ENCODE measurements at regions of chr22 and their contacts with region 1.

Region 1: DNA sequence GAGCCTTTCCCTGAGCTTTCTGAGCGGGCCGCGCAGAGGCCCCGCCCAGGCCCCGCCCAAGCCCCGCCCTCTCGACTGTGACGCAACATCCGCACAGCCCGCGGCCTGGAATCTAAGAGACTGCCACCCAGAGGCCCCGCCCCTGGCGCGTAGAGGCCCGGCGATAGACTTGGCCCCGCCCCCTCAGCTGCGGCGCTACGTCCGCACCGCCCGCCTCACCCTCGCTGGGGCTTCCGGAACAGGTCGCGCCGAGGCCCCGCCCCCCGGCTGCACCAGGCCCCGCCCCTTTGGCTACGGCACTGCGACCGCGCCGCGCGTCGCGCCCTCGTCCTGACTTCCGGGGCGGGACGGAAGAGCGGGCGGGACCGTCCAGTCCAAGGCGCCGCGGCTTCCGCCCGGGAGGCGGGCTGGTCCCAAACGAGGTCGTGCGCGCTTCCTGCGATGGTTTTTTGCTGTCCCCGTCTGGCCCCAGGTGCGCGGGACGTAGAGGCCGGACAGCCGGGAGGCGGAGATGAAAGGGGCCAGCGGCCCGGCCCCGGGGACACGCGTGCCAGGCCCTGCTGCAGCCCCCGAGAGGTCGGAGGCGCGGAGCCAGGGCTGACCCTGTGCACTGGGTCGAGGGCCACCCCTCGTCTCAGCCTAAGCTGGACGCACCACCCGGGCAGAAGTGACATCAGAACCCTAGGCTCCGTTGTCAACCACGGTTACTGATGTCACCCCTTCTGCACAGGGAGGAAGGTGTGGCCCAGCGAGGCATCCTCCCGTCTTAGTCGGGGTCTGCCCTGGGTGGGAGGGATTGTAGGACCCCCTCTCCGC is 59.0 kb upstream of the WNT7B start:
- DNase-seq: peak; percentile 99
- ATAC-seq: peak; percentile 94
- H3K4me3 Mint-ChIP-seq: peak overlapping the region; percentile 88
- H3K27ac Mint-ChIP-seq: peak overlapping the region; percentile 92
- H3K4me1 Mint-ChIP-seq: peaks cover 18% of the 10 kb centered on the region
- H3K27me3 Mint-ChIP-seq: no peaks in the 10 kb centered on the region
- CTCF ChIP-seq: no peak

Region 2: GRCh38 chr22:46006379-46007002 is 29.5 kb before region 1 on chr22:
- CTCF ChIA-PET with region 1: interaction called, 19 read pairs
- POLR2A ChIA-PET with region 1: interaction called, 5 read pairs
- intact Hi-C with region 1: no loop called
- DNase-seq: peak; percentile 85
- ATAC-seq: peak; percentile 84
- H3K4me3 Mint-ChIP-seq: no peak overlapping the region
- H3K27ac Mint-ChIP-seq: no peak overlapping the region
- H3K4me1 Mint-ChIP-seq: peaks cover 12% of the 10 kb centered on the region
- H3K27me3 Mint-ChIP-seq: no peaks in the 10 kb centered on the region
- CTCF ChIP-seq: peak; percentile 80

Region 3: DNA sequence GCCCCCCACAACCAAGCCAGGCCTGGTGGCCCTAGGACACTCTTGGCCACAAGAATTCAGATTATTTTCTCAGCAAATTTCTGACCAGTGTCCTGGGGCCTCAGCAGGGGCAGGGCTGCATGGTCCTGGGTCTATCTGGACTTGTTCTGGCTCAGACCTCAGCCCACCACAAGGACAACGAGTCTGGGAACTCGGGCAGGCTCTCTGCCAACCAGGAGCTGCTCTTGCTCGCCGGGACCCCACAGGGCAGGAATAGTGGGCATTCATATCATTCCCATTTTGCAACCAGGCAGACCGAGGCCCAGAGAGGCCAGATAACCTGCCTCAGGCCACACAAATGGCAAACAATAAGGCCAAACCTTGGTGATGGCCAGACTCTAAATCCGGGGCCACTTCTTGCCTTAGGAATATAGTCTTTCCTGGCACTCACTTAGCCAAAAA is 16.4 kb after region 1 on chr22:
- CTCF ChIA-PET with region 1: no interaction called
- POLR2A ChIA-PET with region 1: interaction called, 51 read pairs
- intact Hi-C with region 1: loop called (anchors 1 kb)
- DNase-seq: no peak
- ATAC-seq: no peak
- H3K4me3 Mint-ChIP-seq: peak overlapping the region; percentile 91
- H3K27ac Mint-ChIP-seq: peak overlapping the region; percentile 96
- H3K4me1 Mint-ChIP-seq: peaks cover 56% of the 10 kb centered on the region
- H3K27me3 Mint-ChIP-seq: no peaks in the 10 kb centered on the region
- CTCF ChIP-seq: no peak

Region 4: DNA sequence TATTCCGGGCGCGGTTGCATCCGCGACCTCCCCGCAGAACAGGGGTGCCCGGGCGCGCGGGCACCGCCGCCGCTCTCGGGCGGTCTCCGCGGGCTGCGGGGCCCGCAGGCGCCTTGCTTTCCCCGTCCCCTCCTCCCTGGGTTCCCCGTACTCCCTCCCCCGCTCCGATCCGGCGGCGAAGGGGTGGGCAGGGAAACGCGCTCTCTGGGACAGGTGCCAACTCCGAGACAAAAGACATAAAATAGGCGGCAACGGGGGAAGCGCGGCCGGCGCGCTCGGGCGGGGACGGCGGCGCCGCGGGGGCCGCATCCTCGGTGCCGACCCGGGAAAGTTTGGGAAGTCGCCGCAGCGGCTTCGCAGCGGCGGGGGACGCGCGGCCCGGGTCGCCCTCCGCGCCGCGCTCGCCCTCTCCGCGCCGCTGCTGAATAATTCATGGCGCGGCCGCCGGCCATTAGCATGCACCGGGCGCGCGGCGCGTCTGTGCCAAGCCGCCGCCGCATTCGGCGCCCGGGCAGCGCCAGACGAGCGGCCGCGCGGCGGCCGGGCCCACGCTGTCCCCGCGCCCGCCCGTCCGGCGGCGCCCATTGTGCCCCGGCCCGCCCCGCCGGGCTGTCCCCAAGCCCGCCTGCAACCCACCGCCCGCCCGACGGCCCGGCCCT is 35.6 kb after region 1 on chr22:
- CTCF ChIA-PET with region 1: interaction called, 5 read pairs
- POLR2A ChIA-PET with region 1: interaction called, 58 read pairs
- intact Hi-C with region 1: loop called (anchors 1 kb)
- DNase-seq: peak; percentile 61
- ATAC-seq: peak; percentile 22
- H3K4me3 Mint-ChIP-seq: peak overlapping the region; percentile 87
- H3K27ac Mint-ChIP-seq: peak overlapping the region; percentile 84
- H3K4me1 Mint-ChIP-seq: peaks cover 27% of the 10 kb centered on the region
- H3K27me3 Mint-ChIP-seq: no peaks in the 10 kb centered on the region
- CTCF ChIP-seq: no peak

Region 5: DNA sequence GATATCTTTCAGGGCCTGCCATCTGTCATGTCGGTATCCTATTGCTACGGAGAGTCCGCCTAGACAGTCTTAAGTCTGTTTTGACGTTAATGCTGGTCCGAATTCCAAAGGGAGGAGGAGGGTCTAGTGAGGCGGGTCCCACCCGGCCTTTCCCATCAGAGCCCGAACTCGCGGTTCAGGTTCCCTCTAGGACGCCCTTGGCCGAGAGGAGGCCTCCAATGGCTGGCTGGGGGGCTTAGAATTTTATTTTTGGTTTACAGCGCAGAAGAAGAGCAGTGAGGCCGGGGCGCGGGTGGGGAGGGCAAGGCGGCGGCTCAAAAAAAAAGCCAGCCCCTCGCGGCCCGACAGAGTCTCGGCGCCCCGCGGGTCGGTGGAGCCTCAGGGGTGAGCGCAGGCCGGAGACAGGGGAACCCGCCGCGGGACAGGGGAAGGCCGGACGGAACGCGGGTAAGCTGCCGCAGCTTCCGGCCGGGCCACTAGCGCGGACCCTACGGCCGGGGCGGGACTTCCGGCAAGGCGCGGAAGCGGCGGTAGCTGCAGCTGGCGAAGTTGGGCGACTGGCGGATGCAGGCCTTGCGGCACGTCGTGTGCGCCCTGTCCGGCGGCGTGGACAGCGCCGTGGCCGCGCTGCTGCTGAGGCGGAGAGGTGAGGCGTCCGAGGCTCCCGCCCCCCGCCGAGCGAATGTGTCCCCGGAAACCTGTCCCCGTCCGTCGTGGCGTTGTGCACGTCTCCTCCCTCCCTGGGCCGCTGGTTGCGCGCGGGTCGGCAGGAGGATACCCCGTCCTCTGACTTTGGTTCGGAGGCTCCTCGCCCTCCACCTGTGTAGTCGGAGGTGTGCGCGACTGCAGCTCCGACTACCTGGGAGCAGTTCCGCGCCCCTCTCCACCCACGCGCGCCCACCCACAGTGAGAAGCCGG is 299.5 kb after region 1 on chr22 and contains the start of gene TRMU:
- CTCF ChIA-PET with region 1: no interaction called
- POLR2A ChIA-PET with region 1: interaction called, 5 read pairs
- intact Hi-C with region 1: loop called (anchors 10 kb)
- DNase-seq: peak; percentile 82
- ATAC-seq: peak; percentile 92
- H3K4me3 Mint-ChIP-seq: peak within 1 kb of the TSS; percentile 93
- H3K27ac Mint-ChIP-seq: peak within 1 kb of the TSS; percentile 92
- H3K4me1 Mint-ChIP-seq: peaks cover 26% of the 10 kb centered on the region
- H3K27me3 Mint-ChIP-seq: no peaks in the 10 kb centered on the region
- CTCF ChIP-seq: no peak
- total RNA-seq, gene TRMU: 52.2 and 60.0 TPM in 2 replicates

Region 6: DNA sequence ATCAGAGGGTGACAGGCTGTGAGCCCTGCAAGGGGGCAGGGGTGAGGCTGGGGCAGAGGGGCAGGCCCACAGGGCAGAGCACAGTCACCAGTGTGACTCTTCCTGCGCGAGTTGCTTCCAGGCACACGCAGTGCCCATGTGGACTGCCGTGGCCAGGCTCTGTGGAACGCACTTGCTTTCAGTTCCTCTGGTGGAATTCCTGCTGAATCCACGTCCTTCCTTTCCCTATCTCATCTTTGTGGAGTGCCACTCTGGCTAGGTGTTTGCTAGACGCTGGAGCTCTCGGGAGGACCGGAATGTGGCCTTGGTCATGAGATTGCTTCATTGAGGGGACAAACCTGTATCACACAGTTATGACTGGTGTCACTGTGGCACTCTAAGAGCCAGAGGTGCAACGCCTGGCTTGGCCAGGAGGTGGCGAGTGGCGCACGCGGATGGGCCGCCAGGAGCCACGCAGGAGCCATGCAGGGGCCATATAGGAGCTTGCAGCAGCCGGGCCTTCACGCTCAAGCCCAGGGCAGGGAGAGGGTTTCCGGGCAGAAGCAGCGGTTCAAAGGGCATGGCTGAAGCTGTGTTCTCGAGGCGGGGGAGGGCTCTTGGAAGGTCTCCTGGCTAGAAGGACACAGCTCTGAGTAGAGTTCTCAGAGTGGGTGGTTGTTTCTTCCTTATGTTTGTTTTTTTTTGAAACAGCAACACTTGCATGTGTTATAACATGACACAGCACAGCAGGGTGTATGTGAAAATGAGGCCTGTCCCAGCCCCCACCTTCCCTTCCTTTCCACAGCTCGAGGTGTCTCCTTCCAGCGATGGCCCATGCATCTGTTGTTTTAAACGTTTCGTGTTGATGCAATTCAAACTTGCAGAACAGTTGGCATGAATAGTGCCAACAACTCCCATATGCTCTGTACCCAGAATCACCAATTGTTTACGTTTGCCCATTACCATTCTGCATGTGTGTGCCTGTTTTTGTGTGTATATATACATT is 762.7 kb after region 1 on chr22:
- CTCF ChIA-PET with region 1: no interaction called
- POLR2A ChIA-PET with region 1: interaction called, 10 read pairs
- intact Hi-C with region 1: no loop called
- DNase-seq: peak; percentile 69
- ATAC-seq: peak; percentile 90
- H3K4me3 Mint-ChIP-seq: no peak overlapping the region
- H3K27ac Mint-ChIP-seq: peak overlapping the region; percentile 18
- H3K4me1 Mint-ChIP-seq: peaks cover 36% of the 10 kb centered on the region
- H3K27me3 Mint-ChIP-seq: no peaks in the 10 kb centered on the region
- CTCF ChIP-seq: peak; percentile 28